Heart left ventricle (tissue), 16 donors: ENCODE measurements at regions of chr4 and their contacts with region 1.

Region 1: GRCh38 chr4:64465263-64465662 is 56.0 kb upstream of the TECRL start:
- DNase-seq: no peak
- ATAC-seq: peak; percentile 26 to 68 (median 44)
- H3K4me3 ChIP-seq: no peak overlapping the region
- H3K27ac ChIP-seq: no peak overlapping the region
- H3K4me1 ChIP-seq: peaks cover 0 to 5% (median 0%) of the 10 kb centered on the region in 12 donors
- H3K27me3 ChIP-seq: no peaks in the 10 kb centered on the region
- CTCF ChIP-seq: no peak
- POLR2A ChIP-seq: no peak

Region 2: GRCh38 chr4:64430933-64431332 is 34.3 kb before region 1 on chr4:
- intact Hi-C with region 1: loop called in 1 of 10 experiments (anchors 5 kb)
- DNase-seq: no peak
- ATAC-seq: peak in 1 of 4 donors; percentile 24
- H3K4me3 ChIP-seq: no peak overlapping the region
- H3K27ac ChIP-seq: no peak overlapping the region
- H3K4me1 ChIP-seq: no peaks in the 10 kb centered on the region
- H3K27me3 ChIP-seq: no peaks in the 10 kb centered on the region
- CTCF ChIP-seq: no peak
- POLR2A ChIP-seq: no peak

Region 3: DNA sequence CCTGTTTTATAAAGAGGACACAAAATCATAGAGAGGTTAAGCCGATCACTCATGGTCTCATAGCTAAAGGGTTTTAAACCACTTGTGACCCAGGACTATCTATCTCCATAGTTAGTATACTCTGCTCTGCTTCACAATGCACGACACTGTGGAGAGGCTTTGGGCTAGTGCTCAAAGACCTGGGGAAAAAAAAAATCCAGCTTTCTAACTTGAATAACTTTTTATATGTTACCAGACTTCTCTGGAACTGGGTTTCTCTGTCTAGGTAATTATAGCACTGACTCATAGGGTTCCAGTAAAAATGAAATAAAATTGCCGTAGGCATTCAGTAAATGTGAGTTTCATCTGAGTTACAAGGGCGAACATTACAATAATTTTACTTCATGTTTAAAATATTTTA is 217.7 kb after region 1 on chr4:
- intact Hi-C with region 1: no loop called
- DNase-seq: no peak
- ATAC-seq: no peak
- H3K4me3 ChIP-seq: no peak overlapping the region
- H3K27ac ChIP-seq: no peak overlapping the region
- H3K4me1 ChIP-seq: no peaks in the 10 kb centered on the region
- H3K27me3 ChIP-seq: no peaks in the 10 kb centered on the region
- CTCF ChIP-seq: no peak
- POLR2A ChIP-seq: no peak